ENCODE measurements at regions of chr9 and their contacts with region 1.

Region 1: DNA sequence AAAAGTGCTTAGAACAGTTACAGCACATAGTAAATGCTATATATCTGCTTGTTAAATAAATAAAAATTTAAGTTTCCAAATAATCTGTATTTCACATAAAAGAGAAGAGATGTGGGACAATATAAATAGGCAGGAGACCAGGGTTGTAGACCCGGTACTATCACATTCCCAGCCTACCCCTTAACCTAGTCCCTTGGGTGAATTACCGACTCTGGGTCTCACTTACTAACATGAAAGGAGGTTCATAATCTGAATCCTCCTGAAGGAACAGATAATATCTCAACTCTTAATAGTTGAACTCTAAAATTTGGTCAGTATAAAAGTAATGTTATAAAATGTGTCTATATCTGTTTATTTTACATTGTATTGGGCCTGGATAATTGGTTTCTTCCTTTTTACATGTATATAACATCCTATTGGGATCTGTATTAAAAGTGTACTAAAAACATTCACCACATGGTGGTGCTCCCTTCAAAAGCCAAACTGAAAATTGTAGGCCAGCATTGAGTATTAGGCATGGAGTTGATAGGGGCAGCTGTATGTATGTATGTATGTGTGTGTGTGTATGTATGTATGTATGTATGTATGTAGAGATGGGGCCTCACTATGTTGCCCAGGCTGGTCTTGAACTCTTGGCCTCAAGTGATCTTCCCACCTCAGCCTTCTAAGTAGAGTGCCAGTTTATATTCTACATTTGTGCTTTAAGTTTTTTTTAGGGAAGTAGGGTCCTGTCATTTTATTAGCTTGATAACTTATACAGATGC is 64.2 kb upstream of the ABL1 start:
- DNase-seq: peak; percentile 11
- ATAC-seq: peak; percentile 88
- H3K4me3 Mint-ChIP-seq: no peak overlapping the region
- H3K27ac Mint-ChIP-seq: no peak overlapping the region
- H3K4me1 Mint-ChIP-seq: peaks cover 36% of the 10 kb centered on the region
- H3K27me3 Mint-ChIP-seq: no peaks in the 10 kb centered on the region
- CTCF ChIP-seq: peak; percentile 76

Region 2: DNA sequence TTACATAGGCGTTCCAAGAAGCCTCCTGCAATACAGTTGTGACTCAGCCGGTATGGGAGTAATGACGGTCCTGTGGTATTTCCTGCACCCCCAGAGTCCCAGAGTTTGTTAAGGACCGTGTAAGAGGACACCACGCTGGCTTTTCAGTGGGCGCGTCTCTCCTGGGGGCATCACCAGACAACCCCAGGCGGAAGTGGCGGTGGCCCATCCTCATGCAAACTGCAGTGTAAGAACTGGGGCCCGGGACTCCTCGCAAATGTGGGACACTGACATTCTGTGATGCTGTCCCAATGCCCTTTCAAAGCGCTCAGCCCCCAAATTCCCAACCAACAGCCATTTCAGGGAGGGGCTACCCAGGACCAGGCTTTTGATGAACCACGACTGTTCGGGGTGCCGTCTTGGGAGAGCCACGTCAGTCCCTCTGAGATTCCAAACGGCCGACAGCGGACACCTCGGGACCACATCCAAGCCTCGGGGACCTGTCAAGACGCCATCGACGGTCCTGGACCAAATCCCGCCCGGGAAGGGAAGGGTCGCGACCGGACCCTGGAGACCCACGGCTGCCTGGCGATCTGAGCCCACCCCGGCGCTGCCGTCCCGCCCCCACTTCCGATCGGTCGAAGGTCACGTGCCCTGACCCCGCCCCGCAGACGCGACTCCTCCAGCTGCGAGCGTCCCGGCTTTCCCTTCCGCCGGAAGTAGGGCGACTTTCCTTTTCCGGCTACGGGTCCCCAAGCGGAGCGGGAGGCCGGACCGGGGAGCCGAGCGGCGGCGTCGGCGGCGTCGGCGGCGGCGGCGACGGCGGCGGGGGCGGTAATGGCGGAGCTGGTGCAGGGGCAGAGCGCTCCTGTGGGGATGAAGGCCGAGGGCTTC is 191.8 kb before region 1 on chr9 and contains the start of gene FUBP3:
- CTCF ChIA-PET with region 1: no interaction called
- POLR2A ChIA-PET with region 1: no interaction called
- intact Hi-C with region 1: no loop called
- DNase-seq: peak; percentile 95
- ATAC-seq: peak; percentile 89
- H3K4me3 Mint-ChIP-seq: peak within 1 kb of the TSS; percentile 91
- H3K27ac Mint-ChIP-seq: peak within 1 kb of the TSS; percentile 91
- H3K4me1 Mint-ChIP-seq: peaks cover 34% of the 10 kb centered on the region
- H3K27me3 Mint-ChIP-seq: no peaks in the 10 kb centered on the region
- CTCF ChIP-seq: no peak
- total RNA-seq, gene FUBP3: 32.9 to 42.9 TPM

Region 3: DNA sequence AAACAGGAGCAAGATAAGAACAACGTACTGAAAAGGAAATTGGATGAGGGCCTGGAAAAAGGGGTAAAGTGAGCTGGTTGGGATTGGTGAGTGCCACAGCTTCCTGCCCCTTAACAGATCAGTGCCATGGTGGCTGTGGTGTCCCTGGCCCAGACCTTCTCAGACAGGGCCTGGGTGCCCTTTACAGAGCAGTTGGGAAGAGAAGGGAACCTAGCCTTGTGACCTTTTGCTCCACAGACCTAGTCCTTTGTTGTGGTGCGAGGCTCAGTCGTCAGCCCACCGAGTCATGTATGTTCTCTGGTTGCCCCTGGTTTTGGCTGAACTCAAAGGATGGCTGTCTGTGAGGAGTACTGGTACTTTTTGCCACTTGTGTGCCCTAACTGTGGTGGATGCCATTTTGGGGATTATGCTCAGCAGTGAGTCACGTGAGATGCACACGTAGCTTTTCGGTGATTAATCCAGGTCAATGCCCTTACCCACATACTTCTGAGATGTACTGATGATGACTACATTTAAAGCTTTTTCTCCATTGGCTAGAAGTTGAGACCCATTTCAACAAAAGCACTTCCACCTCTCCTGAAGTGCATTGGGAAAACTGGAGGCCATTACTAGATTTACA is 28.9 kb before region 1 on chr9:
- CTCF ChIA-PET with region 1: no interaction called
- POLR2A ChIA-PET with region 1: no interaction called
- intact Hi-C with region 1: no loop called
- DNase-seq: peak; percentile 57
- ATAC-seq: peak; percentile 90
- H3K4me3 Mint-ChIP-seq: no peak overlapping the region
- H3K27ac Mint-ChIP-seq: no peak overlapping the region
- H3K4me1 Mint-ChIP-seq: peaks cover 19% of the 10 kb centered on the region
- H3K27me3 Mint-ChIP-seq: no peaks in the 10 kb centered on the region
- CTCF ChIP-seq: no peak

Region 4: GRCh38 chr9:130860458-130861316 is 89.8 kb after region 1 on chr9:
- CTCF ChIA-PET with region 1: interaction called, 26 read pairs
- POLR2A ChIA-PET with region 1: no interaction called
- intact Hi-C with region 1: loop called (anchors 5 kb)
- DNase-seq: no peak
- ATAC-seq: no peak
- H3K4me3 Mint-ChIP-seq: no peak overlapping the region
- H3K27ac Mint-ChIP-seq: no peak overlapping the region
- H3K4me1 Mint-ChIP-seq: no peaks in the 10 kb centered on the region
- H3K27me3 Mint-ChIP-seq: no peaks in the 10 kb centered on the region
- CTCF ChIP-seq: no peak